Heart right ventricle (tissue), 16 donors: ENCODE measurements at regions of chr15 and their contacts with region 1.

Region 1: GRCh38 chr15:70271422-70272088 is 173.8 kb upstream of the TLE3 start:
- DNase-seq: no peak
- ATAC-seq: peak in 5 of 8 donors; percentile 32 to 80 (median 44)
- H3K4me3 ChIP-seq: no peak overlapping the region
- H3K27ac ChIP-seq: peak overlapping the region in 2 of 10 donors; percentile 31 to 71
- H3K4me1 ChIP-seq: peaks cover 11 to 58% (median 46%) of the 10 kb centered on the region in 9 donors
- H3K27me3 ChIP-seq: no peaks in the 10 kb centered on the region
- CTCF ChIP-seq: no peak

Region 2: GRCh38 chr15:70023064-70023768 is 248.3 kb before region 1 on chr15:
- intact Hi-C with region 1: loop called in 1 of 10 experiments (anchors 10 kb)
- DNase-seq: no peak
- ATAC-seq: peak in 5 of 8 donors; percentile 26 to 55 (median 46)
- H3K4me3 ChIP-seq: no peak overlapping the region
- H3K27ac ChIP-seq: peak overlapping the region in 2 of 10 donors; percentile 19 to 30
- H3K4me1 ChIP-seq: peaks cover 9 to 31% (median 22%) of the 10 kb centered on the region in 9 donors
- H3K27me3 ChIP-seq: peaks cover 0 to 35% (median 9%) of the 10 kb centered on the region in 7 donors
- CTCF ChIP-seq: no peak

Region 3: GRCh38 chr15:70226337-70226980 is 45.1 kb before region 1 on chr15:
- intact Hi-C with region 1: no loop called
- DNase-seq: no peak
- ATAC-seq: no peak
- H3K4me3 ChIP-seq: no peak overlapping the region
- H3K27ac ChIP-seq: no peak overlapping the region
- H3K4me1 ChIP-seq: no peaks in the 10 kb centered on the region
- H3K27me3 ChIP-seq: no peaks in the 10 kb centered on the region
- CTCF ChIP-seq: no peak

Region 4: DNA sequence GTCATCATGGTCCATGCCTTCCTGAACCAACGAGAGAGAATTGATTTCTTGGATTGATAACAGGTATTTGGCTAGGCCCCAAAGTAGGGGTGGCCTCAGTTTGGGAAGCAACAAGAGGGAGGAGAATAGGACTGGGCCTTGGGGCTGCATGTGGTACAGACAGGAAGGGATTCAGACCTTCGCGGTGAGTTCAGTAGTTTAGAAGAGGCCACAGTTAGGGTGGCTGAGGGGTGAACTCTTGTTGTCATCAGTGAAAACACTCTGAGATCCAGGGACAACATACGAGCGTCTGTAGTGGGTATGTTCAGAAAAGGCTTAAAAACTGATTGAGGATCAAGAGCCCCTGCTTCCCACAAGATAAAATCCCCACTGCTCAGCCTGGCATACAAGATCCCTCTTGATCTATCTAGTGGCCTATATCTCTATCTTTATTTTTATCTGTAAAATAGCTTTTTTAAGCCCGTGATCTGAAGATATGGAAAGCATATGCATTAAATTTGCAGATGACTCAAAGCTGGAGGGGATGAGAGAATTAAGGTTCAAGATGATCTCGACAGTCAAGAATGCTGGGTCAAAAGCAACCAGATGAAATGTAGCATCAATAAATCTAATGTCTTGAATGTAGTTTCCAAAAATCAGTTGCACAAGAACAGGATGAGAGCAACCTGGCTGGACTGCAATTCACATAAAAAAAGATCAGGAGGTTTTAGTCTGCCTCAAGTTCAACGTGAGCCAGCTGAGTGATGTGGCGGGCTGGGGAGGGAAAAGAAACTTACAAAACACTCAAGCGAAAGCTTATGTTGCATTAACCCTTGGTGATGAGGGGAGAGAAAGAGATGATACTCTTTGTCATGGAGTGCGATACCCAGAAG is 47.3 kb after region 1 on chr15:
- intact Hi-C with region 1: loop called in 1 of 10 experiments (anchors 5 kb)
- DNase-seq: no peak
- ATAC-seq: no peak
- H3K4me3 ChIP-seq: no peak overlapping the region
- H3K27ac ChIP-seq: no peak overlapping the region
- H3K4me1 ChIP-seq: peaks cover 0 to 48% (median 25%) of the 10 kb centered on the region in 9 donors
- H3K27me3 ChIP-seq: peaks cover 0 to 20% (median 17%) of the 10 kb centered on the region in 7 donors
- CTCF ChIP-seq: no peak

Region 5: DNA sequence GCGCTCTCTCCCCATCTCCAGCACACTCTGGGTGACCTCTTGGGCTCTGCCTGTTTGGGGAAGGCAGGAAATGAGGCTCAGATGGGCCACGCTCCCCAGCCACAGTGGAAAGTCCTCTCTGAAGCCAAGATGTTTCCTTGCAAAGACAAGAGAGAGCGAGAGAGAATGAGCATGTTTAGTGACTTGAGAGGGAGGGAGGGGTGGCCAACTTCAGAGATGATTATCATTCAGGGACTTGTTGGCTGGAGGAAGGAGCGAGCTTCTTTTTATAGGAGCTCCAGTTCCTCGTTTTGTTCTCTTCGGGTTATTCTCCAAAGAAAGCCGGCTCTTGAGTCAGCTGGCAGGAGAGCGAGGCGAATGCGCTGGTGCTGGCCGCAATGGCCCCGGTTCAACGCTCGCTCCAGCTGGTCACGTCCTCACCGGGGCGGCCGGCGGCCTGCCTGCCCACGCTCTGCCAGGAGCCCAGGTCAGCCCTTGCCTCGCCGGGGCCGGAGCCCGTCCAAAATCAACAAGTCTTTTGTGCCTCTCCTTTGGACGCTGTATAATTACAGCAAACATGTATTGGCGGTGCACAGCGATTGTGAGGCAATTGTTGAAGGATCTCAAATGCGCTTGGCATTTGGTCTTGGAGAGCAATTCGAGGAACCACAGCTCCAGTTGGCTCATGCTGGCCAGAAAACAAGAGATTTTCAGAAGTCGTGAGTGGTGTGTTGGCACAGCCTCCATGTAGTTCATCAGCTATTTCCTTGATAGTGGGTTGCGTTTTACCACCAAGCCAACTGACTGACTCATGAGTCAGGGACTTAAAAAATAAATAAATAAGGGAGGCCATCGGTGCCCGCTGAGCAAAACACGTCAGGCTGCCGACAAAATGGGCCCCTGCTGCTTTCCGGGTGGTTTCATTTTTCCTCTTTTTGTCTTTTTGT is 203.2 kb after region 1 on chr15:
- intact Hi-C with region 1: loop called in 1 of 10 experiments (anchors 10 kb)
- DNase-seq: peak; percentile 32 to 63
- ATAC-seq: peak; percentile 54 to 74 (median 62)
- H3K4me3 ChIP-seq: peak overlapping the region in 7 of 10 donors; percentile 9 to 34 (median 25)
- H3K27ac ChIP-seq: peak overlapping the region in 8 of 10 donors; percentile 9 to 89 (median 49)
- H3K4me1 ChIP-seq: peaks cover 0 to 48% (median 16%) of the 10 kb centered on the region in 9 donors
- H3K27me3 ChIP-seq: peaks cover 0 to 22% (median 4%) of the 10 kb centered on the region in 7 donors
- CTCF ChIP-seq: no peak